ENCODE measurements at regions of chr11 and their contacts with region 1.

Region 1: DNA sequence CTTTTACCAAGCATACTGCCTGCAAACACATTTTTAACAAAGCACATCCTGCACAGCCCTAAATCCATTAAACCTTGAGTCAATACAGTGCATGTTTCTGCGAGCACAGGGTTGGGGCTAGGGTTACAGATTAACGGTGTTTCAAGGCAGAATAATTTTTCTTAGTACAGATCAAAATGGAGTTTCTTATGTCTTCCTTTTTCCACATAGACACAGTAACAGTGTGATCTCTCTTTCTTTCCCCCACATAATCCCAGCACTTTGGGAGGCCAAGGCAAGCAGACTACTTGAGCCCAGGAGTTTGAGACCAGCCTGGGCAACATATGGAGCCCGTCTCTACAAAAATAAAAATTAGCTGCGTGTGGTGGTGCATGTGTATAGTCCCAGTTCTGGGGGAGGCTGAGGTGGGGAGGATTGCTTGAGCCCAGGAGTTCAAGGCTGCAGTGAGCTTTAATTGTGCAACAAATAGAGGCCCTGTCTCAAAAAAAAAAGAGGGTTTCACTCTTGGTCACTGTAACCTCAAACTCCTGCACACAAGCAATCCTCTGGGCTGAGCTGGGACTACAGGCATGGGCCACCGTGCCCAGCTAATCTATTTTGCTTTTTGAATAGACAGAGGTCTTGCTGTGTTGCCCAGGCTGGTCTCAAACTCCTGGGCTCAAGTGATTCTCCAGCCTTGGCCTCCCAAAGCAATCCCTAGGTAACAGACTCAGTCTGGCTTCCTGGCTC is 19.7 kb upstream of the SLC3A2 start:
- DNase-seq: no peak
- H3K4me3 ChIP-seq: no peak overlapping the region
- H3K27ac ChIP-seq: no peak overlapping the region
- H3K4me1 ChIP-seq: no peaks in the 10 kb centered on the region
- H3K27me3 ChIP-seq: no peaks in the 10 kb centered on the region
- CTCF ChIP-seq: no peak
- EP300 ChIP-seq: no peak
- POLR2A ChIP-seq: no peak

Region 2: DNA sequence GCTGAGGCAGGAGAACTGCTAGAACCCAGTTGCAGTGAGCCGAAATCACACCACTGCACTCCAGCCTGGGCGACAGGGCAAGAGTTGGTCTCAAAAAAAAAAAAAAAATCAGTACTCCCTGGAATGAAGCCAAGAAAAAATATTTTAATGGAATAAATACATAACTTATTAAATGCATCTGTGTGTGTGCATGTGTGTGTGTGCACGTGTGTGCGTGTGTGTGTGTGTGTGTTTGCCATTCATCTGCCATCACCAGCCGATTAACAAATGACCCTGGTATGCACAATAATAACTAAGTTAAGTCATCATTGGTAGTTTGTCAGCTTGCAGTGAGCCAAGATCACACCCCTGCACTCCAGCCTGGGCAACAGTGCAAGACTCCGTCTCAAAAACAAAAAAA is 477.2 kb before region 1 on chr11:
- intact Hi-C with region 1: loop called in 1 of 4 experiments (anchors 10 kb)
- DNase-seq: no peak
- H3K4me3 ChIP-seq: no peak overlapping the region
- H3K27ac ChIP-seq: no peak overlapping the region
- H3K4me1 ChIP-seq: no peaks in the 10 kb centered on the region
- H3K27me3 ChIP-seq: no peaks in the 10 kb centered on the region
- CTCF ChIP-seq: no peak
- EP300 ChIP-seq: no peak
- POLR2A ChIP-seq: no peak

Region 3: DNA sequence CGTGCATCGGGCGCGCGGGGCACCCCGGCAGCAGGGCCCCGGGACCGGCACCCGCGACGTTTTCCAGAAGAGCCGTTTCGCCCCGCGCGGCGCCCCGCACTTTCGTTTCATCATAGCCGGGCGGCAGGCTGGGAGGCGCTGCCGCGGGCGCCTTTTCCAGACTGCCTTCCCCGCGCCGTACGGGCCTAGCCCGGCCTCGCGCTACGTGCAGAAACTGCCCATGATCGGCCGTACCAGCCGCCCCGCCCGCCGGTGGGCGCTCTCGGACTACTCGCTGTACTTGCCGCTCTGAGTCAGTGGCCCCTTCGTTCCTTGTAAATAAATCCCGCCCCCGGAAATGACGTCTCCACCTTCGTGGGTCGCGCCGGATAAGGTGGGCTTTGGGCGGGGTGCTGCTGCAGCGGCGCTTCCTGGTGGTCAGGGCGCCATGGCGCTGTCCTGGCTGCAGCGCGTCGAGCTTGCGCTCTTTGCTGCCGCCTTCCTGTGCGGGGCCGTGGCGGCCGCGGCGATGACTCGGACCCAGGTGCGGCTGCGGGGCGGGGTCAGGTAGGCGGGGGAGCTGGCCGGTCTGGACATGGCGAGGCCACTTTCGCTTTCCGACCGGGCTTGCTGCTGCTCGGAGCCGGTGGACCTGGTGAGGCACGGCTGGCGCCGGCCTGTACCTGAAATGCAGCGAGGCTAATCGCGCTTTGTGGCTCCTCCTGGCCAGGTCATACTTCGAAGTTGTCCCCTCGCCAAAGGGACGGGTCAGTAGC is 73.8 kb before region 1 on chr11 and contains the start of gene TMEM179B:
- intact Hi-C with region 1: loop called (anchors 2 to 5 kb)
- DNase-seq: peak; percentile 96 to 99 (median 98)
- H3K4me3 ChIP-seq: peak within 1 kb of the TSS; percentile 58
- H3K27ac ChIP-seq: peak within 1 kb of the TSS; percentile 89 to 94
- H3K4me1 ChIP-seq: no peaks in the 10 kb centered on the region
- H3K27me3 ChIP-seq: no peaks in the 10 kb centered on the region
- CTCF ChIP-seq: peak; percentile 13 to 57 (median 57)
- EP300 ChIP-seq: no peak
- POLR2A ChIP-seq: peak; percentile 91
- total RNA-seq, gene TMEM179B: 32.7 to 101 (median 36.5) TPM